Activated B cell treated with CpG ODN at 0.5 μM for 24 hours (primary cell): ENCODE measurements at regions of chr12 and their contacts with region 1.

Region 1: GRCh38 chr12:24728366-24728765 is 220.5 kb downstream of the BCAT1 start:
- DNase-seq: no peak
- ATAC-seq: peak; percentile 26
- H3K4me3 Mint-ChIP-seq: no peak overlapping the region
- H3K27ac Mint-ChIP-seq: peak overlapping the region; percentile 85
- H3K4me1 Mint-ChIP-seq: peaks cover 98% of the 10 kb centered on the region
- H3K27me3 Mint-ChIP-seq: no peaks in the 10 kb centered on the region
- CTCF ChIP-seq: no peak

Region 2: DNA sequence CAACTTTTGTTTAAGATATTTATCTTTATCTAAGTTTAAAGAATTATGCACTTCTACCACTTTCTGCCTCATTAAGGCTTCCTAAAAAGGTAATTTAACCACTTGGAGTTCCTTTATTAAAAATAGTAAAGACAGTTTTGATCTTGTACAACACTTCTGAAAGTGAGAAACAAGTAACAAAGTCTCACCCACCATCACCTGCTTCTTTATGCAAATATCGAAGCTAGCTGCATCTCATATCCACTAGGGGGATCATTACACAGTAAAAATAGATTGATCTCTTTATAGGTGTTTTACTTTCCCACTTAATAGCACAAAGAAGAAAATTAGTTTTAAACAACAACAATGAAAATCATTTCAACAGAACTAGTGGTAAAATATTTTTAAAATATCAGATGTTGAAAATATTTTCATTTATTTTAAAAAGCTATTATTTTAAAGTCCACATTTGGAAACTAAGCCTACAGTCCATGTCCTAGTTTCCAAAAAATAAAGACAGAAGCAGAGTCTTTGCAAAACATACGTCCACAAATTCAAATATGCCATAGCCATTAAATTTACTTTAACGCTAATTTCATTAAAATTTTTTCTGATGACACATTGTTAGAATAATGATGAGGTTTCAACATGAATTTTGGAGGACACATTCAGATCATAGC is 618.9 kb before region 1 on chr12:
- CTCF ChIA-PET with region 1: interaction called, 7 read pairs
- POLR2A ChIA-PET with region 1: interaction called, 9 read pairs
- intact Hi-C with region 1: loop called (anchors 1 kb)
- DNase-seq: no peak
- ATAC-seq: peak; percentile 64
- H3K4me3 Mint-ChIP-seq: no peak overlapping the region
- H3K27ac Mint-ChIP-seq: no peak overlapping the region
- H3K4me1 Mint-ChIP-seq: peaks cover 5% of the 10 kb centered on the region
- H3K27me3 Mint-ChIP-seq: no peaks in the 10 kb centered on the region
- CTCF ChIP-seq: peak; percentile 36

Region 3: DNA sequence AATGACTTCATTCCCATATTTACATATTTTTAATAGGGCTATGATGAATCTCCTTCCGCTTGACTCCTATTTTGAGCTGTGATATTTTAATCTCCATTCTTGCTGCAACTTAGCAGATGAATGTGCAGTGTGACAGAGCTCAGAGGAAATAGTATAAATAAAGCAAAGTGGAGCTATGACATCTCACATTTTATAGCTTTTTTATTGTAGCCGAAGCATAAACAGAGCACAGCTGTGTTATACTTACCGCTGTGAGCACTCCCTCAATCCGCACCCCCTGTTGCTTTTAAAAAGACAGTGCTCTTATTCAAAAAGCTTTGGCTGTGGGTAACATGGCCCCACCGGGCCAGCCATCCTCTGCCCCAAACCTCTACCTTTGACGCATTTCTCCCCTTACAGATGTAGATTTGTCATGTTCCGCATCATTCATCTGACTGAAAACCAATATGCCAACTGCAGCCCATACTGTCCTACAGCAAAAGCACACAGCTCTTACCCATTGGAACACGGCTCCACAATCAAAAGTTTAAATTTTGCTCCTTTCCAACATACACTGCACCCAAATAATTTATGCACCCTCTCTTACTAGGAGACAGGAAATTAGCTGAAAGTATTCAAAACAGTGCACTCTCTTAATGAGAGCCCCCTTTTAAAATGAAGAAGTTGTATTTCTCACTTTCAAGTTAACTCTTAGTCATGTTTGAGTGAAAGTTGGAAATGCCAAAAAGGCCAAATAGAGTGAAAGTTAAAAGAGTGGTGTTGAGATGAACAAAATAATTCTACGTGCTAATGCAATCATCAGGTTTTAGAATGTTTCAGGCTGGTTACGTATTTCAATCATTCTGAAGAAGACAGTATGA is 349.6 kb before region 1 on chr12:
- CTCF ChIA-PET with region 1: no interaction called
- POLR2A ChIA-PET with region 1: interaction called, 8 read pairs
- intact Hi-C with region 1: loop called (anchors 2 kb)
- DNase-seq: peak; percentile 26
- ATAC-seq: peak; percentile 76
- H3K4me3 Mint-ChIP-seq: peak overlapping the region; percentile 84
- H3K27ac Mint-ChIP-seq: peak overlapping the region; percentile 95
- H3K4me1 Mint-ChIP-seq: peaks cover 40% of the 10 kb centered on the region
- H3K27me3 Mint-ChIP-seq: no peaks in the 10 kb centered on the region
- CTCF ChIP-seq: no peak

Region 4: DNA sequence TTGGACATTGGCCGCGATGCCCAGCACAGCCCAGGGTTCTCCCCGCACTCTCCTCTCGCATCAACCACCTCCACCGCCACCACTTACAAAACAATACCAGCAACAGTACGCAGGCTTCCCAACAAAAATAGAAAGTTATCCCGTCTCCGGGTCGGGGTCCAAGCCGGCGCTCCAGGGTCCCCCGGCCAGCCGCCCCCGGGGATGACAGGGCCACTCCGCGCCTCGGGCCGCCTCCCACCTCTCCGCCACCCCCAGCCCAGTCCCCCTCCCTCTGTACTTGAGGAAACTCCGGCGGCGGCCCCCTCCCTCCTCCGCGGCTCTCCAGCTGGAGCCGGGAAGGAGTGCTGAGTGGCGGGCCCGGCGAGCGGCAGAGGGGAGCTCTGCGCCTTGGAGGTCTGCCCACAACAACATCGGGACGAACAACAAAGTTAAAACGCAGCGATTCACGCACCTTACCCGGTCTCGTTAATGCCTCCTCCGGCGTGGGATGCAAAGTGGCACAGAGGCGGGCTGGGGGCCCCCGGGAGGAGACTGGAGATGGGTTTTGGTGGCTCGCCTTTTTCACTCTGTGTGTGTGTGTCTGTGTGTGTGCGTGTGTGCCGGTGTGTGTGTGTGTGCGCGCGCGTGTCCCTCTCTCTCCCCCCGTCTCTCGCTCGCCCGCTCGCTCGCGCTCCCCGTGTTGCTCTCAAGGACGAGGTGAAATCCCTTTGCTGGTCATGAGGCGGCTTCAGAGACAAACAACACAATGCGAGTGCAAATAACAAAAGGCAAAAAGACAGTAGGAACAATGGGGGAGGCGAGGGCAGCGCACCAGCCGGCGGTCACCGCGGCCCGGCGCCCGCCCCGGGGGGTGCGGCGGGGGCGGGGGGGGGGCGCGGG is 166.2 kb before region 1 on chr12:
- CTCF ChIA-PET with region 1: no interaction called
- POLR2A ChIA-PET with region 1: interaction called, 5 read pairs
- intact Hi-C with region 1: loop called (anchors 2 kb)
- DNase-seq: peak; percentile 46
- ATAC-seq: peak; percentile 55
- H3K4me3 Mint-ChIP-seq: peak overlapping the region; percentile 87
- H3K27ac Mint-ChIP-seq: peak overlapping the region; percentile 76
- H3K4me1 Mint-ChIP-seq: peaks cover 28% of the 10 kb centered on the region
- H3K27me3 Mint-ChIP-seq: peaks cover 23% of the 10 kb centered on the region
- CTCF ChIP-seq: no peak

Region 5: DNA sequence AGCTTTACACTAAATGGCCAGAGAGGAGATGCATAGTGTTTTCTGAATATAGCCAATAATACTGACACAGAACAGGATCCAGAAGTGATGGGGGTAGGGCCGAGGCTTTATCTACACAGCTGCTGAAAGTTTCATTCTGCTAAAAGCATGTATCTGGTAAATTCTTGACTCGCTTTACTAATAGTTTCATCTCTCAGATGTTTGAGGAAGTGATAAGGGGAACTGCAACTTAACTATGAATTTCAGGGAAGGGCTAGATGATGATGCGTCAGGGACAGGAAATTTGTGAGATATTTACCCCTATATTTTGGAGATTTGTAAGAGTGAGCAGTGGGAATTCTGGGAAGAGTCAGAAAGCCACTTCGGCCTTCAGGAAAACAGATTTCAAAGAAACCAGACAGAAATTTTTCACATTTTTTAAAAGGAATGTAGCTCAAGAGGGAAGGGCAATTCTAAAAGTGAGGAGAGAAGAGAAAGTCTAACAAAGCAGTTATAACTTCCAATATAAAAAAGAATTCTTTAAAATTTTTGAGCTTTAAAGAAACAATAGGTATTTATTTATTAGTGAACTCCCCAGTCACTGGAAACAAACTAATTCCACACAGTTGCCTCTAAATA is 22.5 kb before region 1 on chr12:
- CTCF ChIA-PET with region 1: interaction called, 5 read pairs
- POLR2A ChIA-PET with region 1: interaction called, 63 read pairs
- intact Hi-C with region 1: loop called (anchors 1 kb)
- DNase-seq: no peak
- ATAC-seq: peak; percentile 91
- H3K4me3 Mint-ChIP-seq: peak overlapping the region; percentile 66
- H3K27ac Mint-ChIP-seq: peak overlapping the region; percentile 81
- H3K4me1 Mint-ChIP-seq: peaks cover 51% of the 10 kb centered on the region
- H3K27me3 Mint-ChIP-seq: no peaks in the 10 kb centered on the region
- CTCF ChIP-seq: no peak

Region 6: DNA sequence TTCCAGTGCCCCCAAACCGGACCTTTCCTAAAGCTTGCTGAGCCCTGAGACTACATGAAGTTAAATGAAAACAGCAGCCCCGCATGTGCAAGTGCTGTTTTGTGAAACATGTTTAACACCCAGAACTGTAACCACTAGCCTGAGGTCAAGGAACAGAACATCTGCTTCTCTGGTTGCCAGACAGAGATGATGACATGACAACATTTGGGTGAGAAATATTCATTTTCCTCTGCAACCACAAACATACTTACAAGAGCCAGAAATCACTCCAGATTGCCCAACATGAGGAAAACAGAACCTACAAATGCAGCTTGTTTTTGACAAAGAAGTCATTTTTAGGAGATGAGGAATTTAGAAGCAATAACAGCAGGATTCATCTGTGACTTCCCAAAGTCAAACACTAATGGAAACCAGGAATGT is 110.2 kb after region 1 on chr12:
- CTCF ChIA-PET with region 1: interaction called, 3 read pairs
- POLR2A ChIA-PET with region 1: interaction called, 8 read pairs
- intact Hi-C with region 1: loop called (anchors 1 kb)
- DNase-seq: no peak
- ATAC-seq: no peak
- H3K4me3 Mint-ChIP-seq: no peak overlapping the region
- H3K27ac Mint-ChIP-seq: peak overlapping the region; percentile 24
- H3K4me1 Mint-ChIP-seq: peaks cover 23% of the 10 kb centered on the region
- H3K27me3 Mint-ChIP-seq: no peaks in the 10 kb centered on the region
- CTCF ChIP-seq: no peak